Heart right ventricle (tissue), 16 donors: ENCODE measurements at regions of chr1 and their contacts with region 1.

Region 1: DNA sequence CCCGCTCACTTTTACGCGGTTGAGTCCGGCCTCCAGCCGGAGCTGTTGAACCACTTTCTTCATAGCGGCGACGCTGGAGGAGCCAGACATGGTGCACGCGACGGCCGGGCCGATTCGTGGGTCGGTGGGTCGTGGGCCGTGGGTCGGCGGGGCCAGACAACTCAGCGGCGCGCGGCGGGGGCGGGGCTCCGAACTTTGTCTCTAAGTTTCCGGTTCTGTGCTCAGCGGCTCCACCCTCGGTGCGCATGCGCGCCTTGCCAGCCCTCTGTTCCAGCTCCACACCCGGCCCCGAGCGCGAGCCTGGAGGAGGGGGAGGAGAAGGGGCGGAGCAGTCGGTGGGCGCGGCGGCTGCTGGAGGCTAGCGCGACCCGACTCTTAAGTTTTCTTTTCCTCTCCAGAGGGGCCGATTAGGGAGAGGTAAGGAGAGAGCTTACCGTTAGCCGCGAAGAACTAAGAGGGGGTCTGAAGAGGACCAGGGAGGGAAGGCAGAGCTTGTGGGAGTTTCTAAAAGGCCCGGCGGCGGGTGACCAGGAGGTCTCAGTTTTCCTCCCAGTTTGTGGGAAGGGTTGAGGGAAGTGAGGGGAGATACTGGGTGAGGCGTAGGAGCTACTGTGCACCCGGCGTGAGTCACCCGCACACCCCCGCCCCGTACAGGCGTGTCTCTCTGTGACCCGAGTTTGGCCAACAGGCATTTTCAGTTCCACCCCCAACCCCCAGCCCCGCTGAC is at the starts of genes GNG5 and SPATA1:
- DNase-seq: peak; percentile 98 to 99
- ATAC-seq: peak; percentile 96 to 98 (median 98)
- H3K4me3 ChIP-seq: peak within 1 kb of the TSS; percentile 51 to 91 (median 74)
- H3K27ac ChIP-seq: peak within 1 kb of the TSS; percentile 93 to 99 (median 98)
- H3K4me1 ChIP-seq: peaks cover 0 to 48% (median 42%) of the 10 kb centered on the region in 9 donors
- H3K27me3 ChIP-seq: no peaks in the 10 kb centered on the region
- CTCF ChIP-seq: no peak
- total RNA-seq, gene GNG5: 155 to 216 (median 164) TPM
- total RNA-seq, gene SPATA1: 0.78 to 2.9 (median 1.6) TPM

Region 2: DNA sequence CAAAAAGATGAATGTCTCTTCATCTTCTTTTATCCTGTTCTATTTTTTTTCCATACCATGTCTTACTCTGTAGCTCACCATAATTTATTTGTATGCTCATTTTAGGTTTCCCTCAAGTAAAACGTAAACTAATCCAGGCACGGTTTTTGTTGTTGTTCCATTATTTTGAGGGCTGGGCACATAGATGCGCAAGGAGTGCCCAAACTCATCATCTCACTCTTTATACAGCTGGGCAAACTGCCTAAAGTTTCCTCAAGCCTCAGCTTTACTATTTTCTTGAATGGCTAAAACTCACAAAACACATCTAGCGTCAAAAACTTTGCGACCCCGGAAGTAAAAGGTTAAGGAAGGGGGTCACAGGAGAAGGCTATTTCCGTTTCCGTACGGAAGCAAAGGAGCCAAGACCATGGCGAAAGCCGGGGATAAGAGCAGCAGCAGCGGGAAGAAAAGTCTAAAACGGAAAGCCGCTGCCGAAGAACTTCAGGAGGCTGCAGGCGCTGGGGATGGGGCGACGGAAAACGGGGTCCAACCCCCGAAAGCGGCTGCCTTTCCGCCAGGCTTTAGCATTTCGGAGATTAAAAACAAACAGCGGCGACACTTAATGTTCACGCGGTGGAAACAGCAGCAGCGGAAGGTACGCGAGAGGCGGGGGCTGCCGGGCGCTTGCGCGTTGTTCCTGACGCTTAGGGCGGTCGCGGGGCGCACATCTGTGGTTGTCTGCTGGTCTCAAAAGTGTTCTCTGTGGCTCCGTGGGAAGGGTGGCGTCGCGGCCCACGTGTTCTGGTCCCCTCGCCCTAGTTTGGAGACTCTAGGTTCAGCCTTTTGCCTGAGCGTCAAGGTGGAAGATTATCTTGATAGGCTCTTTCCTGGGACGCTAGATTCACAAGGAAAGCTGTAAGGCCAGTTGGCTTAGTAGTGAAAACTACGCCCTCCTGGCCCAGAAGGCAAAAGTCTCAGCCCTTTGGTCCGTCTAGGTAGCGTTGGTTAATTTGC is 27.0 kb before region 1 on chr1 and contains the start of gene RPF1:
- intact Hi-C with region 1: loop called in 1 of 10 experiments (anchors 1 kb)
- DNase-seq: peak; percentile 71 to 74
- ATAC-seq: peak; percentile 95 to 98 (median 97)
- H3K4me3 ChIP-seq: peak within 1 kb of the TSS; percentile 54 to 88 (median 78)
- H3K27ac ChIP-seq: peak within 1 kb of the TSS; percentile 9 to 94 (median 86)
- H3K4me1 ChIP-seq: peaks cover 0 to 35% (median 23%) of the 10 kb centered on the region in 9 donors
- H3K27me3 ChIP-seq: peaks cover 0 to 42% (median 36%) of the 10 kb centered on the region in 7 donors
- CTCF ChIP-seq: no peak
- total RNA-seq, gene RPF1: 28.0 to 38.9 (median 32.0) TPM

Region 3: GRCh38 chr1:84573967-84574842 is 68.0 kb after region 1 on chr1 and contains the start of gene CTBS:
- intact Hi-C with region 1: loop called in 8 of 10 experiments (anchors 1 to 10 kb)
- DNase-seq: peak; percentile 90 to 92
- ATAC-seq: peak; percentile 96 to 100 (median 98)
- H3K4me3 ChIP-seq: peak within 1 kb of the TSS; percentile 53 to 88 (median 74)
- H3K27ac ChIP-seq: peak within 1 kb of the TSS; percentile 88 to 100 (median 98)
- H3K4me1 ChIP-seq: peaks cover 0 to 41% (median 14%) of the 10 kb centered on the region in 9 donors
- H3K27me3 ChIP-seq: no peaks in the 10 kb centered on the region
- CTCF ChIP-seq: no peak
- total RNA-seq, gene CTBS: 5.8 to 13.2 (median 7.3) TPM

Region 4: DNA sequence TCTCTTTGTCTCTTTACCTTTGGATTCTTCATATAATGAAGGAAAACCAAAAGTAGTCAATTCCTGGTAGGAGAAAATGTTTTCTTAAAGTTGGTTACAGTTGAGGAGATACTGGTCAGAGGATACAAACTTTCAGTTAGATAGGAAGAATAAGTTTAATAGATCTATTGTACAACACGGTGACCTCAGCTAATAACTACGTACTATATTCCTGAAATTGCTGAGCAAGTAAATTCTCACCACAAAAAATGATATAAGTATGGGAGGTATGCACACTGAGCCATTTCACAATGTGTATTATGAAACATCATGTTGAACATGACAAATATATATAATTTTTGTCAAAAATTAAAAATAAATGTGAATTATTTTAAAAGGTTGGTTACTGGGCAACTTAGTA is 163.7 kb after region 1 on chr1:
- intact Hi-C with region 1: no loop called
- DNase-seq: no peak
- ATAC-seq: no peak
- H3K4me3 ChIP-seq: no peak overlapping the region
- H3K27ac ChIP-seq: no peak overlapping the region
- H3K4me1 ChIP-seq: no peaks in the 10 kb centered on the region
- H3K27me3 ChIP-seq: no peaks in the 10 kb centered on the region
- CTCF ChIP-seq: no peak